ENCODE measurements at regions of chr5 and their contacts with region 1.

Region 1: GRCh38 chr5:112757468-112758208 is 20.0 kb downstream of the APC start:
- DNase-seq: peak; percentile 52
- ATAC-seq: peak; percentile 91
- H3K4me3 ChIP-seq: no peak overlapping the region
- H3K27ac ChIP-seq: no peak overlapping the region
- H3K4me1 ChIP-seq: 0 out of 2 replicates have a peak, but pooled peaks cover 4% of the 10 kb centered on the region
- H3K27me3 ChIP-seq: no peaks in the 10 kb centered on the region
- CTCF ChIP-seq: peak; percentile 76

Region 2: GRCh38 chr5:112174959-112175594 is 582.6 kb before region 1 on chr5:
- CTCF ChIA-PET with region 1: no interaction called
- POLR2A ChIA-PET with region 1: no interaction called
- in situ Hi-C with region 1: no loop called
- intact Hi-C with region 1: loop called (anchors 10 kb)
- DNase-seq: no peak
- ATAC-seq: peak; percentile 90
- H3K4me3 ChIP-seq: no peak overlapping the region
- H3K27ac ChIP-seq: no peak overlapping the region
- H3K4me1 ChIP-seq: peaks cover 4% of the 10 kb centered on the region; the same call in 1 of the 2 replicates
- H3K27me3 ChIP-seq: peaks cover 7% of the 10 kb centered on the region
- CTCF ChIP-seq: peak; percentile 78

Region 3: DNA sequence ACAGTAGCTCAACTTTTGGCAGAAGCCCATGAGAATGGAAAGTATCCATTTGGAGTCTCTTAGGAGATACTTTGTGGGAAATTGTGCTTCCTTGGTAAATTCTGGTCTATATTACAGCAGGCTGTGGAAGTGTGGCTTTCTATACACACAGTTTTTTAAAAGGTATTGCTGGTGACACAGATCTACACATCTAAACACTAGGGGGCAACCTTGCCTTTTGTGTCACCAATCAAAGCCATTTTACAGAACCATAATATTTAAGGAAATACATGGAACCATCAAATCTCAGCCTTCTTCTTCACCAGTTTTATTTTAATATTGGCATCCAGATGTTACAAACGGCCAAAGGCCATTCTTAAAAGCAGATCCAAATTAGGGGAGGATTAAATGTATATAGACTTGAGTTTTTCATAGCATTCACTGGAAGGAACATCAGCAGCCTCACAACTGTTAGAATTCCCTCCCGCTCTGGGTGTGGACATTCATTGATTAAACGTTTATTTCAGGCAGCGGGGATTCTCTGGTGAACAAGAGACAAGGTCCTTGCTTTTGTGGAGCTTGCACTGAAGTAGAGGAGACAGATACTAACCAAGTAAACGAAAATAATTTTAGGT is 206.1 kb before region 1 on chr5:
- CTCF ChIA-PET with region 1: interaction called, 8 read pairs
- POLR2A ChIA-PET with region 1: no interaction called
- in situ Hi-C with region 1: no loop called
- intact Hi-C with region 1: loop called (anchors 1 kb)
- DNase-seq: peak; percentile 39
- ATAC-seq: peak; percentile 79
- H3K4me3 ChIP-seq: no peak overlapping the region
- H3K27ac ChIP-seq: no peak overlapping the region
- H3K4me1 ChIP-seq: no peaks in the 10 kb centered on the region
- H3K27me3 ChIP-seq: no peaks in the 10 kb centered on the region
- CTCF ChIP-seq: peak; percentile 76

Region 4: DNA sequence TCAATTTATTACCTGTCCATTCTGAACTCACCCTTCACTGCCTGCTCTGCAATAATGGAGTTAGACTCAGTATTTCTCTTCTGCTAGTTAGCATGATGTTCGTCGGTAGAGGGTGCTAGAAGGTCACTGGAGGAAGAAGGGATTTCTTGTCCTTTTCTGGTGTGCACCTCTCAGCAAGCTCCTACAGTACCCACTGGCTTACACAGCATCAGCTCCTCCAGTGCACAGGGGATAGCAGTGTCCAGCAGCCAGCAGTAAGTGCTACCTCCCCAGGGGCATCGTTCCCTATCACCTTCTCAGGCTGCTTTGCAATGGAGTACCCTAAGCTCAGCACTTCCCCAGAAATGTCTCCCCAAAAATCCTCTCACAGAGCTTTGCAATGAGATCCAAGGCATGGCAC is 65.9 kb before region 1 on chr5:
- CTCF ChIA-PET with region 1: interaction called, 6 read pairs
- POLR2A ChIA-PET with region 1: no interaction called
- in situ Hi-C with region 1: no loop called
- intact Hi-C with region 1: loop called (anchors 2 kb)
- DNase-seq: peak; percentile 20
- ATAC-seq: peak; percentile 79
- H3K4me3 ChIP-seq: no peak overlapping the region
- H3K27ac ChIP-seq: no peak overlapping the region
- H3K4me1 ChIP-seq: no peaks in the 10 kb centered on the region
- H3K27me3 ChIP-seq: peaks cover 5% of the 10 kb centered on the region
- CTCF ChIP-seq: peak; percentile 67

Region 5: DNA sequence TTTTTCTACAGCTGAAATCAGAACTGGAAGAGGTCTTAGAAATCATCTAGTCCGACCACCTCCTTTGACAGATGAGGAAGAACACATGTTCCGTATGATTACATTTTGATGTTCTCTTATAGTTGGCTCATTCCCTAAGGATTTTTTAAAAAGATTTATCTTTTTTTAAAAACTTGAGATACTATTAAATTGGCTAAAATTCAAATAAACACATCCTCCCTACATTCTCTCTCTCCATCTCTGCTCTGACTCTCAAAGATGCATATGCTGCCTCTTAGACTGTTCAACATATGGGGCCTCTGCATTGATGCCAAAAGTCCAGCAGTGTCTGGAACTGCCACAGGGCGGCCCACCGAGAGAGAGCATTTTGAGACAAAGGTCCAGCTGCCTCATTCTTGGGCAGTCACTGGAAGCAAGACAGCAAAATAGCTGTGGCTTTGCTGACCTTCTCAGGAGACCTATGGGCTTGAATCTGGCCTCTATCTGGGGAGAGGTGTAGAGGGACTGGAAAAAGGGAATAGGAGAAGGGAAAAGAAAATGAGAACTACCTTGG is 689.9 kb after region 1 on chr5:
- CTCF ChIA-PET with region 1: no interaction called
- POLR2A ChIA-PET with region 1: no interaction called
- in situ Hi-C with region 1: no loop called
- intact Hi-C with region 1: no loop called
- DNase-seq: no peak
- ATAC-seq: peak; percentile 63; the same call in 1 of the 2 replicates
- H3K4me3 ChIP-seq: no peak overlapping the region
- H3K27ac ChIP-seq: no peak overlapping the region
- H3K4me1 ChIP-seq: no peaks in the 10 kb centered on the region
- H3K27me3 ChIP-seq: peaks cover 9% of the 10 kb centered on the region
- CTCF ChIP-seq: peak; percentile 17

Measured in Panc1 (cell line).